ENCODE measurements at regions of chr4 and their contacts with region 1.

Region 1: GRCh38 chr4:146132445-146132844 is 43.1 kb upstream of the LSM6 start:
- DNase-seq: peak; percentile 28
- H3K4me3 Mint-ChIP-seq: no peak overlapping the region
- H3K27ac Mint-ChIP-seq: peak overlapping the region; percentile 61
- H3K4me1 Mint-ChIP-seq: peaks cover 20% of the 10 kb centered on the region
- H3K27me3 Mint-ChIP-seq: peaks cover 8% of the 10 kb centered on the region

Region 2: DNA sequence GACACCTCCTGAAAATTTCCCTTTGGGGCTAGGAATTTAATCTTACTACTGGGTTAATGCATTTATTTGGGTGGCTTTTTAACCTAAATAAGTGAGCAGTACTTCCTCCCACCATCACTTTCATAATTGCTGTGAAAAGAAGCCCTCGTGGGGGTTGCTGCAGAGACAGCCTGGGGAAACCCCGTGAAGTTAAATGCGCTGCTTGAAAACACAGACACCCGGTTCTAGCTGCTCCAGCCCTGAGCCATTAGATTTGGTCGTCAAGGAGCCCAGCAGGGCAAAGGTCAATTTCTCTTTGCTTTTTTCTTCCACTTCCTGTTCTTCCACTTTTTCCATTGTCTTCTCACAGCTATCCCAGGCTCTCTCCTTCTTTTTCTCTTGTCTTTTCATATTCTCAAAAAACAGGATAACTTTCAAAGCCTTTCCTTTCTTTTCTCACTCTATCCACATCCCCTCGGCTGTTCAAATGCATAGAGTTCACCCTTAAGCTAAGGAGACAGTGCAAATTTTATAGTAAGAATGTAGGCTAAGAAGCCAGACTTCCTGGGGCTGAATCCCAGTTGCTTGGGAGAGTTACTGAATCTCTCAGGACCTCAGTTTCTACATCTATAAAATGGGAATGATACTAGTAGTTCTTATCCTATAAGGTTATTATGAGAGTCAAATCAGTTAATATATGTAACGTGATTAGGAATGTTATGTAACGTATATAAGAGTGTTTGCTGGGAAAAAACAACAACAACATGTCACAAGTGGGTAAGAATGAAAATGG is 102.3 kb before region 1 on chr4:
- intact Hi-C with region 1: loop called (anchors 1 kb)
- DNase-seq: no peak
- H3K4me3 Mint-ChIP-seq: no peak overlapping the region
- H3K27ac Mint-ChIP-seq: no peak overlapping the region
- H3K4me1 Mint-ChIP-seq: peaks cover 12% of the 10 kb centered on the region
- H3K27me3 Mint-ChIP-seq: peaks cover 10% of the 10 kb centered on the region

Region 3: DNA sequence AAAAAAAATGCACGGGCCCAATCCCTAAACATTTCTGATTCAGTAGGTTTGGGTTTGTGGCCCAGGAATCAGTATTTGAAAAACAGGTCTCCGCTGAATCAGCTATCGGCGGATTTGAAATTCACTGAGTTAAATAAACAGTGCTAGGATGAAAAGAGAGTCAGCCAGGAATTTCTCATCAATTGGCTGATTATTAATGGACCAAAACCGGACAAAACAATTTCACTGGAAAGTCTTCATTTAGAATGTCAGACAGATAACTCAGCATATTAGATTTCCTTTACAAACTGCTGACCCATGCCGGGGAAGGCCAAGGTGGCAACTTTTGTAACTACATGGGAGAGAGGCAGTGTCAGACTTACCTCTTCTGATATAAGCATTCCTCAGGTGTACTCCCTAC is 56.4 kb before region 1 on chr4:
- intact Hi-C with region 1: no loop called
- DNase-seq: no peak
- H3K4me3 Mint-ChIP-seq: no peak overlapping the region
- H3K27ac Mint-ChIP-seq: no peak overlapping the region
- H3K4me1 Mint-ChIP-seq: no peaks in the 10 kb centered on the region
- H3K27me3 Mint-ChIP-seq: peaks cover 7% of the 10 kb centered on the region

Region 4: GRCh38 chr4:146095091-146095690 is 37.3 kb before region 1 on chr4:
- intact Hi-C with region 1: loop called (anchors 5 kb)
- DNase-seq: no peak
- H3K4me3 Mint-ChIP-seq: no peak overlapping the region
- H3K27ac Mint-ChIP-seq: no peak overlapping the region
- H3K4me1 Mint-ChIP-seq: peaks cover 4% of the 10 kb centered on the region
- H3K27me3 Mint-ChIP-seq: peaks cover 15% of the 10 kb centered on the region

Region 5: GRCh38 chr4:146105464-146105863 is 27.0 kb before region 1 on chr4:
- intact Hi-C with region 1: loop called (anchors 1 kb)
- DNase-seq: no peak
- H3K4me3 Mint-ChIP-seq: no peak overlapping the region
- H3K27ac Mint-ChIP-seq: no peak overlapping the region
- H3K4me1 Mint-ChIP-seq: peaks cover 12% of the 10 kb centered on the region
- H3K27me3 Mint-ChIP-seq: peaks cover 6% of the 10 kb centered on the region

Region 6: GRCh38 chr4:146159384-146160058 is 27.1 kb after region 1 on chr4:
- intact Hi-C with region 1: loop called (anchors 1 kb)
- DNase-seq: no peak
- H3K4me3 Mint-ChIP-seq: no peak overlapping the region
- H3K27ac Mint-ChIP-seq: peak overlapping the region; percentile 1
- H3K4me1 Mint-ChIP-seq: peaks cover 7% of the 10 kb centered on the region
- H3K27me3 Mint-ChIP-seq: peaks cover 3% of the 10 kb centered on the region

Region 7: GRCh38 chr4:146175541-146176453 is 43.4 kb after region 1 on chr4 and contains the start of gene LSM6:
- intact Hi-C with region 1: loop called (anchors 1 kb)
- DNase-seq: peak; percentile 77
- H3K4me3 Mint-ChIP-seq: peak within 1 kb of the TSS; percentile 88
- H3K27ac Mint-ChIP-seq: peak within 1 kb of the TSS; percentile 81
- H3K4me1 Mint-ChIP-seq: peaks cover 40% of the 10 kb centered on the region
- H3K27me3 Mint-ChIP-seq: no peaks in the 10 kb centered on the region
- total RNA-seq, gene LSM6: 62.9 and 65.0 TPM in 2 replicates

Region 8: DNA sequence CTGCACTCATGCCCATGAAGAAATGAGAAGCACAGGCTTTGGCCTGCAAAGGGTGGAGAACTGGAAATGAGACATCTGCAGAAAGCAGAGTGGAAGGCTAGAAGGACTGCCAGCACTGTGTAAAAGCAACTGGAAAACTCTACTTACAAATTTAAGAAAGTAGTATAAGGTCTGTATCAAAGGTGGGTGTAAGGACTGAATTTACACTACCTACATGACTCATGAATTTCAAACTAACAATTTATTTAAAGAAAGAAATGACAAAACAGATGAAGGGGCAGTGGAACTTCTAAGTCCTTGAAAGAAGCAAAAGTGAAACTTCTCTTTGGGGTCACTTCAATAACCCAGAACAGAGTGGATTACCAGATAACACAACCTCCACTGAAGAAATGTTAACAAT is 318.1 kb after region 1 on chr4:
- intact Hi-C with region 1: loop called (anchors 2 kb)
- DNase-seq: no peak
- H3K4me3 Mint-ChIP-seq: peak overlapping the region; percentile 38
- H3K27ac Mint-ChIP-seq: peak overlapping the region; percentile 68
- H3K4me1 Mint-ChIP-seq: peaks cover 40% of the 10 kb centered on the region
- H3K27me3 Mint-ChIP-seq: no peaks in the 10 kb centered on the region

Measured in activated T-helper 1 cell treated with anti-CD3 and anti-CD28 coated beads, Interleukin-12 subunit alpha, Interleukin-12 subunit beta, Interleukin-2, Interleukin-4 antibody, amounts not matched to agents 30 ng/mL and 10 ng/mL and 1 ng/mL, durations not matched to agents 14 hours and 24 hours and 36 hours (primary cell).